CD4-positive, alpha-beta T cell (primary cell): ENCODE measurements at regions of chr5 and their contacts with region 1.

Region 1: GRCh38 chr5:123423278-123424149 is at the start of gene CEP120:
- DNase-seq: peak; percentile 93 to 100 (median 96)
- ATAC-seq: peak; percentile 91
- H3K4me3 ChIP-seq: peak within 1 kb of the TSS; percentile 70
- H3K4me3 Mint-ChIP-seq: no peak within 1 kb of the TSS
- H3K27ac ChIP-seq: peak within 1 kb of the TSS; percentile 90
- H3K27ac Mint-ChIP-seq: no peak within 1 kb of the TSS
- H3K4me1 ChIP-seq: peaks cover 9% of the 10 kb centered on the region
- H3K4me1 Mint-ChIP-seq: peaks cover 19% of the 10 kb centered on the region
- H3K27me3 ChIP-seq: no peaks in the 10 kb centered on the region
- H3K27me3 Mint-ChIP-seq: no peaks in the 10 kb centered on the region
- CTCF ChIP-seq: peak; percentile 81
- total RNA-seq, gene CEP120: 69.9 to 74.9 TPM

Region 2: DNA sequence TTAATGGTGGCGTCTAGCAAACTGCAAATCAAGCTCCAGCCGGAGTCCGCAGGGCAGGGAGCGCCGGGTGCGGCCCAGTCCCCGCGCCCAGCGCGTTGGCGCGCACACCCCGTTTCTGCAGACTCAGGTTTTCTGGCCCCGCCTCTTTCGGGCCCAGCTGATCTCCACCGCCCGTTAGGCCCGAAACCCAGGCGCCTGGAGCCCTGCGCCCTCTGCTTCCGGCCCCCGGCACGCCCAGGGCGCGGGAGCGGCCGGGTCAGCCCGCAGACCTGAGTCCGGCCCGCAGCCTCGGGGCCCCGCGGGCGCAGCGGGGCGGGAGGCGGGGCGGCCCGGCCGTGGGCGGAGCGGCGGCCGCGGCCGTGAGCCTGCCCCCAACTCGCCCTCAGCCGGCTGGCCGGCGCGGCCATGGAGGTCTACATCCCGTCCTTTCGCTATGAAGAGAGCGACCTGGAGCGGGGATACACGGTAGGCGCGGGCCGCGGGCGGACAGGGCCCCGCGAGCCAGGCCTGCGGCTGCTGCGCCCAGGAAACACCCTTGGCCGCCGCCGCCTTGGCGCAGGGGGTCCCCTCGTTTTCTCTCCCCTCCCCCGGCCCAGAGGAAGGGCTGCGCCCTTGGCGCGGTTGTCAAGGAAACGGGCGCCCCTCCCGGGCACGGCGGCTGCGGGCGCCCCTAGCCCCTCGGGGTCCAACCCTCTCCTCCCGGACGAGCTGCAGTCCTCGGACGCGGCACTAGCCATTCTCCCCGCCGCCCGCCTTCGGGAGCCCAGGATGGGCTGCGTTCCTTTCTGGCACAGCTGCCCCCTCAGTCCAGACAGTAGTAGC is 578.1 kb before region 1 on chr5 and contains the start of gene SNX24:
- CTCF ChIA-PET with region 1: no interaction called
- POLR2A ChIA-PET with region 1: interaction called, 27 read pairs
- intact Hi-C with region 1: loop called in 1 of 2 experiments (anchors 5 kb)
- DNase-seq: peak; percentile 45 to 88 (median 62)
- ATAC-seq: peak; percentile 87
- H3K4me3 ChIP-seq: peak within 1 kb of the TSS; percentile 82
- H3K4me3 Mint-ChIP-seq: peak within 1 kb of the TSS; percentile 92
- H3K27ac ChIP-seq: peak within 1 kb of the TSS; percentile 62 to 64
- H3K27ac Mint-ChIP-seq: peak within 1 kb of the TSS; percentile 82
- H3K4me1 ChIP-seq: peaks cover 20% of the 10 kb centered on the region
- H3K4me1 Mint-ChIP-seq: peaks cover 38% of the 10 kb centered on the region
- H3K27me3 ChIP-seq: no peaks in the 10 kb centered on the region
- H3K27me3 Mint-ChIP-seq: peaks cover 3% of the 10 kb centered on the region
- CTCF ChIP-seq: no peak
- total RNA-seq, gene SNX24: 2.3 to 3.0 TPM

Region 3: DNA sequence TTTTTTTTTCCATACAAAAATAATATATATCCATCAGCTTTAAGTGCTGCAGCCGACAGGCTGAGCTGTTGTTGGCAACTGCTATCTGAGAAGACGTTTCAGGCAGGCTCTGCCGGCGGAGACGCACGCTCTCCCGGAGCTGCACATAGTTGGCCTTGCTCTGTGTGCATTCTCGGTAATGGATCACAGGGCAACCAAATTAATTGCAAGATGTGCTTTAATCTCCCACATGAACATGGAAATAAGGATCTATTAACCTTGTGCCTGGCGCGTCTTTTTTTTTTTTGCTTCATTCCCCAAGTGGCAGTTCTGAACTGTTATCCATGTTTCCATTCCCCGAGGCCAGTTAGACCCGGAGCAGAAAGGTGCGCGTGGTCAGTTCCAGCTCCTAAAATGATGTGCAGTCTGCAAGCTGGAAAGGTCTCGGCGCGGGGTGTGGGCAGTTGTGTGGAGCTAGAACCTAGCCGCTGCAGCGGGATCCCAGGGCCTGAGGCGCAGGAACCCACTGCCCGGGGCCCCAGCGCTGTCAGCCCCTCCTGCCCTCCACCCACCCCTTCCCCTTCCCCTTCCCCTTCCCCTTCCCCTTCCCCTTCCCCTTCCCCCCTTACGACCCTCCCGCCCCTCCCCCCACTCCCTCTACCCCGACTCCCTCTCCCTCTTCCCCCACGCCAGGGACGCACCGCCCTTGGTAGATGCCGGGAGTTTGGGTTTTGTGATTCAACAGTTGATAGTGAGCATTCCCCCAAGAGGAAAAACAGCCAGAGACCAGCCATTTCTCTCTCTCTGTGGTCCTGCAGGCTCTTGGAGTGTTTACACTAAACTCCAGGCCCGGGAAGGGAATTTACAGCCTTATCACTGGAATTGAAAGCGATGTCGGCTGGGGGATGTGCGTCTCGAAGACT is 138.1 kb before region 1 on chr5:
- CTCF ChIA-PET with region 1: no interaction called
- POLR2A ChIA-PET with region 1: no interaction called
- intact Hi-C with region 1: no loop called
- DNase-seq: no peak
- ATAC-seq: no peak
- H3K4me3 ChIP-seq: no peak overlapping the region
- H3K4me3 Mint-ChIP-seq: no peak overlapping the region
- H3K27ac ChIP-seq: no peak overlapping the region
- H3K27ac Mint-ChIP-seq: no peak overlapping the region
- H3K4me1 ChIP-seq: no peaks in the 10 kb centered on the region
- H3K4me1 Mint-ChIP-seq: no peaks in the 10 kb centered on the region
- H3K27me3 ChIP-seq: peaks cover 9 to 16% of the 10 kb centered on the region in 2 experiments
- H3K27me3 Mint-ChIP-seq: peaks cover 71% of the 10 kb centered on the region
- CTCF ChIP-seq: no peak

Region 4: GRCh38 chr5:123438902-123439301 is 15.4 kb after region 1 on chr5:
- CTCF ChIA-PET with region 1: interaction called, 6 read pairs
- POLR2A ChIA-PET with region 1: interaction called, 19 read pairs
- intact Hi-C with region 1: no loop called
- DNase-seq: peak in 1 of 14 experiments; percentile 42
- ATAC-seq: peak; percentile 63
- H3K4me3 ChIP-seq: no peak overlapping the region
- H3K4me3 Mint-ChIP-seq: no peak overlapping the region
- H3K27ac ChIP-seq: peak overlapping the region in 1 of 2 donors; percentile 3
- H3K27ac Mint-ChIP-seq: peak overlapping the region; percentile 56
- H3K4me1 ChIP-seq: peaks cover 5% of the 10 kb centered on the region
- H3K4me1 Mint-ChIP-seq: no peaks in the 10 kb centered on the region
- H3K27me3 ChIP-seq: no peaks in the 10 kb centered on the region
- H3K27me3 Mint-ChIP-seq: no peaks in the 10 kb centered on the region
- CTCF ChIP-seq: no peak

Region 5: GRCh38 chr5:123511648-123512605 is 88.4 kb after region 1 on chr5 and contains the start of gene CSNK1G3:
- CTCF ChIA-PET with region 1: interaction called, 29 read pairs
- POLR2A ChIA-PET with region 1: interaction called, 181 read pairs
- intact Hi-C with region 1: loop called (anchors 1 to 2 kb)
- DNase-seq: peak; percentile 77 to 97 (median 85)
- ATAC-seq: peak; percentile 85
- H3K4me3 ChIP-seq: peak within 1 kb of the TSS; percentile 83
- H3K4me3 Mint-ChIP-seq: peak within 1 kb of the TSS; percentile 96
- H3K27ac ChIP-seq: peak within 1 kb of the TSS; percentile 63 to 66
- H3K27ac Mint-ChIP-seq: peak within 1 kb of the TSS; percentile 95
- H3K4me1 ChIP-seq: peaks cover 10% of the 10 kb centered on the region
- H3K4me1 Mint-ChIP-seq: peaks cover 45% of the 10 kb centered on the region
- H3K27me3 ChIP-seq: no peaks in the 10 kb centered on the region
- H3K27me3 Mint-ChIP-seq: no peaks in the 10 kb centered on the region
- CTCF ChIP-seq: no peak
- total RNA-seq, gene CSNK1G3: 87.2 to 92.3 TPM

Region 6: GRCh38 chr5:123549256-123549904 is 125.9 kb after region 1 on chr5:
- CTCF ChIA-PET with region 1: interaction called, 8 read pairs
- POLR2A ChIA-PET with region 1: interaction called, 64 read pairs
- intact Hi-C with region 1: loop called in 1 of 2 experiments (anchors 2 kb)
- DNase-seq: peak; percentile 16 to 90 (median 36)
- ATAC-seq: peak; percentile 93
- H3K4me3 ChIP-seq: no peak overlapping the region
- H3K4me3 Mint-ChIP-seq: peak overlapping the region; percentile 1
- H3K27ac ChIP-seq: peak overlapping the region; percentile 6 to 78
- H3K27ac Mint-ChIP-seq: peak overlapping the region; percentile 64
- H3K4me1 ChIP-seq: peaks cover 12% of the 10 kb centered on the region
- H3K4me1 Mint-ChIP-seq: peaks cover 40% of the 10 kb centered on the region
- H3K27me3 ChIP-seq: no peaks in the 10 kb centered on the region
- H3K27me3 Mint-ChIP-seq: no peaks in the 10 kb centered on the region
- CTCF ChIP-seq: no peak